GM12878 (cell line): ENCODE measurements at regions of chr2 and their contacts with region 1.

Region 1: GRCh38 chr2:54665436-54665856 is 58.0 kb upstream of the EML6 start:
- DNase-seq: no peak
- ATAC-seq: peak; percentile 80
- H3K4me3 ChIP-seq: no peak overlapping the region
- H3K27ac ChIP-seq: no peak overlapping the region
- H3K4me1 ChIP-seq: no peaks in the 10 kb centered on the region
- H3K27me3 ChIP-seq: no peaks in the 10 kb centered on the region
- CTCF ChIP-seq: peak; percentile 55 to 71 (median 71)
- EP300 ChIP-seq: no peak
- POLR2A ChIP-seq: no peak
- RAD21 ChIP-seq: peak; percentile 69

Region 2: DNA sequence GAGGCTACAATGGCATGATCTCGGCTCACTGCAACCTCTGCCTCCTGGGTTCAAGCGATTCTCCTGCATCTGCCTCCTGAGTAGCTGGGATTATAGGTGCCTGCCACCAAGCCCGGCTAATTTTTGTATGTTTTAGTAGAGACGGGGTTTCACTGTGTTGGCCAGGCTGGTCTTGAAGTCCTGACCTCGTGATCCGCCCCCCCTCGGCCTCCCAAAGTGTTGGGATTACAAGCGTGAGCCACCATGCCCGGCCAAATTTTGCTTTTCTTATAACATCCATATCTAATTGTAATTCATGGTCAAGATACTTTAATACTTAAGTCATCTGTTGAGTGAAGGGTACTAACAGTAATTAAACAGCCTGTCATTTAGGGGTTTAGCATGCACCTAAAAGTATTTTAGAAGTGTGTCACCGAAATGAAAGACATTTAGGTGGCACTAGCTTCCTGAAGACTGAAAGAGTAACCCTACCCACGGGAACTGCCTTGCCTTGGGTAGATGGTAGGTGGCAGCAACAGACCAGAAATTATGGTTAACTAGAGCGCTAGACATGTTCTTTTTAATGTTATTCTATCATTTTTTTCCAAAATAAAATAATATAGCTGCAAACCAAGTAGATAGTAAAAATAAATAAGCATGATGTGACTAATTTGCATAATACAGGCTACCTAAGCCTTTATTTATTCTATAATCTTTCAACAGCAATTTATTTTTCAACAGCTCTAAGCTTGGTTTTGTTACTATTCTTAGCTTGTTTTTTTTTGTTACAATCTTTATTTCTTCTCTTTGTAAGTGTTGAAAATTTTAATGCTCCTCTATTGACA is 558.6 kb before region 1 on chr2:
- CTCF ChIA-PET with region 1: interaction called, 11 read pairs
- POLR2A ChIA-PET with region 1: no interaction called
- RAD21 ChIA-PET with region 1: interaction called, 5 read pairs
- SMC1A ChIA-PET with region 1: interaction called, 3 read pairs
- in situ Hi-C with region 1: no loop called
- intact Hi-C with region 1: no loop called
- DNase-seq: no peak
- ATAC-seq: peak; percentile 83
- H3K4me3 ChIP-seq: no peak overlapping the region
- H3K27ac ChIP-seq: no peak overlapping the region
- H3K4me1 ChIP-seq: no peaks in the 10 kb centered on the region
- H3K27me3 ChIP-seq: no peaks in the 10 kb centered on the region
- CTCF ChIP-seq: peak; percentile 59 to 73 (median 60); a peak in 5 of 6 replicates
- EP300 ChIP-seq: no peak
- POLR2A ChIP-seq: no peak
- RAD21 ChIP-seq: peak; percentile 73

Region 3: DNA sequence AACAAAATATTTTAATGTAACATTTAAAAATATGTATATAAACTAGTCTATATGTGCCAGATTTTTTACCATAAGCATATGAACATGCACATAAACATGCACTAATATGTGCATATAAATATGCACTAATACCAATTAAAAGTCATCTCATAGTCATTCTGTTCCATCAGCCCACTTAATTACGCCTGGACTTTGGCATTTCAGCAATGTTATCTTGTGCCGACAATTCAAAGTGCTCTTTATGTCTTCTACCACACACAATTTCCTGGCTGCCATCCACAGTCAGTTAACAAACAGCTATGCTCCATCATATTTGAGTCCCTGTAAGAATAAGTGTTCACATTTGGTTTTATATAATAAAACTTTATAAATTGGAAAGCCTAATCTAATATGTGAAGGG is 316.8 kb before region 1 on chr2:
- CTCF ChIA-PET with region 1: no interaction called
- POLR2A ChIA-PET with region 1: no interaction called
- RAD21 ChIA-PET with region 1: no interaction called
- SMC1A ChIA-PET with region 1: no interaction called
- in situ Hi-C with region 1: no loop called
- intact Hi-C with region 1: no loop called
- DNase-seq: no peak
- ATAC-seq: no peak
- H3K4me3 ChIP-seq: no peak overlapping the region
- H3K27ac ChIP-seq: no peak overlapping the region
- H3K4me1 ChIP-seq: no peaks in the 10 kb centered on the region
- H3K27me3 ChIP-seq: peaks cover 0 to 1% of the 10 kb centered on the region in 2 experiments; a peak in 1 of 4 replicates
- CTCF ChIP-seq: no peak
- EP300 ChIP-seq: no peak
- POLR2A ChIP-seq: no peak
- RAD21 ChIP-seq: no peak

Region 4: GRCh38 chr2:54680397-54681041 is 15.1 kb after region 1 on chr2:
- CTCF ChIA-PET with region 1: interaction called, 47 read pairs
- POLR2A ChIA-PET with region 1: interaction called, 6 read pairs
- RAD21 ChIA-PET with region 1: interaction called, 49 read pairs
- SMC1A ChIA-PET with region 1: interaction called, 50 read pairs
- in situ Hi-C with region 1: no loop called
- intact Hi-C with region 1: no loop called
- DNase-seq: peak; percentile 77
- ATAC-seq: peak; percentile 81
- H3K4me3 ChIP-seq: peak overlapping the region; percentile 34; the same call in 1 of the 2 replicates
- H3K27ac ChIP-seq: peak overlapping the region; percentile 47
- H3K4me1 ChIP-seq: peaks cover 31% of the 10 kb centered on the region
- H3K27me3 ChIP-seq: no peaks in the 10 kb centered on the region; a peak in 1 of 4 replicates
- CTCF ChIP-seq: no peak
- EP300 ChIP-seq: peak; percentile 48 to 84; a peak in 3 of 4 replicates
- POLR2A ChIP-seq: no peak
- RAD21 ChIP-seq: no peak

Region 5: DNA sequence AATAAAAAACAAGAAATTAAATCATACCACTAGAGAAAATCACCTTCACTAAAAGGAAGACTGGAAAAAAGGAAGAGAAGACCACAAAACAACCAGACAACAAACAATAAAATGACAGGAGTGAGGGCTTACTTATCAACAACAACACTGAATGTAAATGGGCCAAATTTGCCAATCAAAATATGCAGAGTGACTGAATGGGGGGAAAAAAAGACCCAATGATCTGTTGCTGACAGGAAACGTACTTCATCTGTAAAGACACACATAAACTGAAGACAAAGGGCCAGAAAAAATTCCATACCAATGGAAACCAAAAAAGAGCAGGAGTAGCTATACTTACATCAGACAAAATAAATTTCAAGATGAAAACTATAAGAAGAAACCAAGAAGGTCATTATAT is 32.5 kb after region 1 on chr2:
- CTCF ChIA-PET with region 1: interaction called, 225 read pairs
- POLR2A ChIA-PET with region 1: no interaction called
- RAD21 ChIA-PET with region 1: interaction called, 135 read pairs
- SMC1A ChIA-PET with region 1: interaction called, 187 read pairs
- in situ Hi-C with region 1: no loop called
- intact Hi-C with region 1: no loop called
- DNase-seq: no peak
- ATAC-seq: no peak
- H3K4me3 ChIP-seq: no peak overlapping the region
- H3K27ac ChIP-seq: no peak overlapping the region
- H3K4me1 ChIP-seq: no peaks in the 10 kb centered on the region
- H3K27me3 ChIP-seq: no peaks in the 10 kb centered on the region
- CTCF ChIP-seq: no peak
- EP300 ChIP-seq: no peak
- POLR2A ChIP-seq: no peak
- RAD21 ChIP-seq: no peak

Region 6: GRCh38 chr2:54814389-54815147 is 149.1 kb after region 1 on chr2:
- CTCF ChIA-PET with region 1: no interaction called
- POLR2A ChIA-PET with region 1: no interaction called
- RAD21 ChIA-PET with region 1: no interaction called
- SMC1A ChIA-PET with region 1: no interaction called
- in situ Hi-C with region 1: no loop called
- intact Hi-C with region 1: no loop called
- DNase-seq: no peak
- ATAC-seq: no peak
- H3K4me3 ChIP-seq: no peak overlapping the region
- H3K27ac ChIP-seq: no peak overlapping the region
- H3K4me1 ChIP-seq: no peaks in the 10 kb centered on the region
- H3K27me3 ChIP-seq: peaks cover 0 to 2% of the 10 kb centered on the region in 2 experiments; a peak in 2 of 4 replicates
- CTCF ChIP-seq: no peak
- EP300 ChIP-seq: no peak
- POLR2A ChIP-seq: no peak
- RAD21 ChIP-seq: no peak

Region 7: DNA sequence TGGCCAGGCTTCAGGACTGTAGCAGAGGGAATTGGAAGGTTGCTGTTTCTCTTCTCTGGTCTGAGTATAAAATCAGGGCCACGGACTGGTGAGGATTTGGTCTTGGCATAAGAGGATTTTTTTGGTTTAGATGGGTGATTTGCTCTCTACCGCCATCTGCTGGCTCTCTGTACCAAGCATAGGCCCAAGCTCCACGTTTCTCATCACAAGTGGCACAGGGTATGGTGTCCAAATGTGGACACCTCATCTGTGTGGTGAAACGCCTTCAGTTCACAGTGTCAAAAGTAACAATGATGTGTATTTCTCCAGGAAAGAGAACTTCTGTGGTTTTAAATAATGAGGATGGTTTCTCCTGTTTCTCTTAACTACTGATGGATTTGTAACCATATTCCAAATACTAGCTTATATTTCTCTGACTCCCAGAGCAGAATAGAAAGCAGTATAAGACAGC is 173.2 kb after region 1 on chr2:
- CTCF ChIA-PET with region 1: interaction called, 26 read pairs
- POLR2A ChIA-PET with region 1: no interaction called
- RAD21 ChIA-PET with region 1: interaction called, 10 read pairs
- SMC1A ChIA-PET with region 1: interaction called, 10 read pairs
- in situ Hi-C with region 1: no loop called
- intact Hi-C with region 1: no loop called
- DNase-seq: peak; percentile 20
- ATAC-seq: peak; percentile 98
- H3K4me3 ChIP-seq: no peak overlapping the region
- H3K27ac ChIP-seq: no peak overlapping the region
- H3K4me1 ChIP-seq: no peaks in the 10 kb centered on the region
- H3K27me3 ChIP-seq: no peaks in the 10 kb centered on the region
- CTCF ChIP-seq: peak; percentile 82 to 91 (median 91)
- EP300 ChIP-seq: no peak
- POLR2A ChIP-seq: no peak
- RAD21 ChIP-seq: peak; percentile 74